ENCODE measurements at regions of chr5 and their contacts with region 1.

Region 1: DNA sequence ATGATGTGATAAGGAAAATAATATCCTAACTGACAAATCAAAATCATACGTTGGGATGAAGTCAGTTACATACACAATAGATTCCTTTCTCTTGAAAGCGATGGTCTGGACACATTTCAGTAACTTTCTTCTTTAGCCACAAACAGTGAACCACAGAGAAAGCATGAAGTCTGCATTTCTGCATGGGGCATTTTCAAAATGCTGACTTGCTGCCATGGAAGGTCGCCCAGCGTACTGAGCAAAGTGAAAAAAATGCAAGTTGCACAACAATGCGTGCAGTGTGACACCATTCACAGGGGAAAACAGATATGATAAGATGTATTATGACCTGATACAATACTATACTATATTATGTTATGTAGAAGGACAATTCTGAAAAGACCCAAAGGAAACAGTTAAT is 146.3 kb downstream of the SNX18 start:
- DNase-seq: no peak
- ATAC-seq: no peak
- H3K4me3 Mint-ChIP-seq: no peak overlapping the region
- H3K27ac Mint-ChIP-seq: no peak overlapping the region
- H3K4me1 Mint-ChIP-seq: peaks cover 8% of the 10 kb centered on the region
- H3K27me3 Mint-ChIP-seq: no peaks in the 10 kb centered on the region
- CTCF ChIP-seq: no peak

Region 2: GRCh38 chr5:53090260-53090659 is 1573.6 kb before region 1 on chr5:
- CTCF ChIA-PET with region 1: no interaction called
- POLR2A ChIA-PET with region 1: interaction called, 10 read pairs
- intact Hi-C with region 1: no loop called
- DNase-seq: no peak
- ATAC-seq: peak; percentile 42
- H3K4me3 Mint-ChIP-seq: peak overlapping the region; percentile 28
- H3K27ac Mint-ChIP-seq: peak overlapping the region; percentile 46
- H3K4me1 Mint-ChIP-seq: peaks cover 21% of the 10 kb centered on the region
- H3K27me3 Mint-ChIP-seq: peaks cover 3% of the 10 kb centered on the region
- CTCF ChIP-seq: no peak

Region 3: GRCh38 chr5:54257366-54258118 is 406.3 kb before region 1 on chr5:
- CTCF ChIA-PET with region 1: no interaction called
- POLR2A ChIA-PET with region 1: no interaction called
- intact Hi-C with region 1: no loop called
- DNase-seq: no peak
- ATAC-seq: no peak
- H3K4me3 Mint-ChIP-seq: no peak overlapping the region
- H3K27ac Mint-ChIP-seq: no peak overlapping the region
- H3K4me1 Mint-ChIP-seq: peaks cover 28% of the 10 kb centered on the region
- H3K27me3 Mint-ChIP-seq: no peaks in the 10 kb centered on the region
- CTCF ChIP-seq: no peak

Region 4: GRCh38 chr5:54401515-54401914 is 262.4 kb before region 1 on chr5:
- CTCF ChIA-PET with region 1: no interaction called
- POLR2A ChIA-PET with region 1: no interaction called
- intact Hi-C with region 1: no loop called
- DNase-seq: no peak
- ATAC-seq: peak; percentile 47
- H3K4me3 Mint-ChIP-seq: no peak overlapping the region
- H3K27ac Mint-ChIP-seq: no peak overlapping the region
- H3K4me1 Mint-ChIP-seq: no peaks in the 10 kb centered on the region
- H3K27me3 Mint-ChIP-seq: peaks cover 5% of the 10 kb centered on the region
- CTCF ChIP-seq: no peak

Measured in activated B cell treated with CpG ODN at 0.5 μM for 24 hours (primary cell).